Astrocyte of the cerebellum (primary cell): ENCODE measurements at regions of chr6 and their contacts with region 1.

Region 1: DNA sequence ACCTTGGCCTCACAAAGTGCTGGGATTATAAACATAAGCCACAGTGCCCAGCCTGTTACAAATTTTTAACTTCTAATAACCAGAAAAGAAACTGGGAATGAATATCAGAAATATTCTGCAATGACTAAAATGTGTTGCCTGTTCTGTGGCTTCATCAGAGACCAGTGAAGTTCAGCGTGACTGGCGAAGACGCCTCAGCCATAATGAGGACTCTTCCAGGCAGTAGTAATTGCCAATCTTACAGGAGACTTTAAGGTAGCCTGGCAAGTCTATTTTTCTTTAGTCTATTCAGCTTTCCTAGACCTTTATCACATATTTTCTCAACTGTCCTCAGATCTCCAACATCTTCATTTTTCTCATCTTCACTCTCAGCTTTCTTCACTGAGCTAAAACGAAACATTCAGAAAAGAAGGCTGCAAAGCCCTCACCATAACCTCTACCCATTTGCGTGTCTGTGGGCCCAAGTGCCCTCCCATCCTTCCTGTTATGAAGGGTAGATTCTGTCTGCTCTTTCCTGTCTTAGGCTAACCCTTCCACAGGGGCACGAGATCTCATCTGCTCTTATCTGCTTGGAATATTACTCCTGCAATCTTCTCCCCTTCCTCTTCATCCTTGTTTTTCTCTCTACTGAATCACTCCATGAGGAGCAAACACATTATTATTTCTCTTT is 42.0 kb upstream of the OLIG3 start:
- DNase-seq: no peak
- H3K4me3 ChIP-seq: no peak overlapping the region
- CTCF ChIP-seq: no peak

Region 2: DNA sequence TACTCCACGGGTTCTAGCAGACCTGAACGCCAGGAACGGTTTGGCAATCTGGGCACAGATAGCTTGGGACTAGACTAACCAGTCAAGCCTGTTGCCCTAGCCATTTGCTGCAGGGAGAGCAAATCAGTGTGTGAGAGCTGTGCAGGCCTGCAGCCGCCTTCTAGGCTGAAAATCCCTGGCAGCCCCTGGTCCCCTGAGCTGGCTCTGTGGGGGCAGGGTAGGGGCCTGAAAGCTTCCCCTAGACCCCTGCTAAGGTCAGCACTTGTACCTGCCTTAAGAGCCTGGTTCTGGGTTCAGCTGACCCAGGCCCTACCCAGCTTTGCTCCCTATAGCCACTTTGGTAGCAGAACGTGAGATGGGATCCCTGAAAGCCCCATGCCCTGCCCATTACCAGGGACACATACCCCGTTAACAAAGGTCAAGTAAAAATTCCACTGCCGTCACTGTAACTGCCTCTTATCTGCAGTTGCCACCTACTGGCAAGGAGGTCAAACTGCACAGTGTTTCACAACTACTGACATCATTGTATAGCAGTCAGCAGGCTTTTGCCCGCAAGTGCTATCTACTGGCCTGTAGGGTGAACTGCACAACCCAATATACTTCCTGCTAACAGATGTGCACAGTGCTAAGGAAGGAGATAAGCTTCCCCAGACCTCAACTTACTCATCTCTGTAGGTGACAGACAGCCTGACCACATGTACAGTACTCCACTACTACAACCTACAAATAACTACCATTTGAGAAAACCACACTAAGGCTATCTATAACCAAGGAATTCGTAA is 53.0 kb after region 1 on chr6:
- in situ Hi-C with region 1: loop called (anchors 5 kb)
- DNase-seq: no peak
- H3K4me3 ChIP-seq: no peak overlapping the region
- CTCF ChIP-seq: peak; percentile 46